Gastrocnemius medialis (tissue), 4 donors: ENCODE measurements at regions of chr9 and their contacts with region 1.

Region 1: GRCh38 chr9:129023036-129023907 is 4.9 kb downstream of the SH3GLB2 start:
- DNase-seq: peak; percentile 83 to 95
- ATAC-seq: peak; percentile 69 to 73
- H3K4me3 ChIP-seq: peak overlapping the region in 1 of 4 donors; percentile 11
- H3K27ac ChIP-seq: peak overlapping the region; percentile 81 to 90 (median 86)
- H3K4me1 ChIP-seq: peaks cover 30 to 38% of the 10 kb centered on the region in 2 donors
- H3K27me3 ChIP-seq: no peaks in the 10 kb centered on the region
- CTCF ChIP-seq: no peak
- POLR2A ChIP-seq: no peak

Region 2: GRCh38 chr9:128863647-128864046 is 159.6 kb before region 1 on chr9:
- in situ Hi-C with region 1: no loop called
- intact Hi-C with region 1: loop called (anchors 5 kb)
- DNase-seq: peak; percentile 32 to 69
- ATAC-seq: peak; percentile 40 to 45
- H3K4me3 ChIP-seq: no peak overlapping the region
- H3K27ac ChIP-seq: peak overlapping the region in 2 of 4 donors; percentile 81 to 84
- H3K4me1 ChIP-seq: peaks cover 33 to 34% of the 10 kb centered on the region in 2 donors
- H3K27me3 ChIP-seq: no peaks in the 10 kb centered on the region
- CTCF ChIP-seq: peak; percentile 84 to 97 (median 93)
- POLR2A ChIP-seq: no peak

Region 3: GRCh38 chr9:129006328-129007034 is 16.8 kb before region 1 on chr9:
- in situ Hi-C with region 1: no loop called
- intact Hi-C with region 1: loop called (anchors 2 kb)
- DNase-seq: peak; percentile 65 to 77
- ATAC-seq: peak; percentile 92 to 95
- H3K4me3 ChIP-seq: no peak overlapping the region
- H3K27ac ChIP-seq: peak overlapping the region; percentile 61 to 71 (median 66)
- H3K4me1 ChIP-seq: peaks cover 15 to 28% of the 10 kb centered on the region in 2 donors
- H3K27me3 ChIP-seq: no peaks in the 10 kb centered on the region
- CTCF ChIP-seq: peak; percentile 66 to 92 (median 74)
- POLR2A ChIP-seq: no peak